Stomach (tissue), 19 donors: ENCODE measurements at regions of chr11 and their contacts with region 1.

Region 1: GRCh38 chr11:18641677-18642076 is 7.5 kb upstream of the SPTY2D1 start:
- DNase-seq: no peak
- H3K4me3 ChIP-seq: no peak overlapping the region
- H3K27ac ChIP-seq: no peak overlapping the region
- H3K4me1 ChIP-seq: no peaks in the 10 kb centered on the region
- H3K27me3 ChIP-seq: peaks cover 0 to 15% (median 0%) of the 10 kb centered on the region in 3 donors
- CTCF ChIP-seq: no peak
- EP300 ChIP-seq: no peak
- POLR2A ChIP-seq: no peak

Region 2: GRCh38 chr11:18710545-18710944 is 68.9 kb after region 1 on chr11:
- intact Hi-C with region 1: loop called (anchors 10 kb)
- DNase-seq: no peak
- H3K4me3 ChIP-seq: no peak overlapping the region
- H3K27ac ChIP-seq: no peak overlapping the region
- H3K4me1 ChIP-seq: peaks cover 9 to 15% (median 14%) of the 10 kb centered on the region in 4 donors
- H3K27me3 ChIP-seq: peaks cover 0 to 11% (median 0%) of the 10 kb centered on the region in 3 donors
- CTCF ChIP-seq: no peak
- EP300 ChIP-seq: no peak
- POLR2A ChIP-seq: no peak